Ovary (tissue), 10 donors: ENCODE measurements at regions of chr18 and their contacts with region 1.

Region 1: DNA sequence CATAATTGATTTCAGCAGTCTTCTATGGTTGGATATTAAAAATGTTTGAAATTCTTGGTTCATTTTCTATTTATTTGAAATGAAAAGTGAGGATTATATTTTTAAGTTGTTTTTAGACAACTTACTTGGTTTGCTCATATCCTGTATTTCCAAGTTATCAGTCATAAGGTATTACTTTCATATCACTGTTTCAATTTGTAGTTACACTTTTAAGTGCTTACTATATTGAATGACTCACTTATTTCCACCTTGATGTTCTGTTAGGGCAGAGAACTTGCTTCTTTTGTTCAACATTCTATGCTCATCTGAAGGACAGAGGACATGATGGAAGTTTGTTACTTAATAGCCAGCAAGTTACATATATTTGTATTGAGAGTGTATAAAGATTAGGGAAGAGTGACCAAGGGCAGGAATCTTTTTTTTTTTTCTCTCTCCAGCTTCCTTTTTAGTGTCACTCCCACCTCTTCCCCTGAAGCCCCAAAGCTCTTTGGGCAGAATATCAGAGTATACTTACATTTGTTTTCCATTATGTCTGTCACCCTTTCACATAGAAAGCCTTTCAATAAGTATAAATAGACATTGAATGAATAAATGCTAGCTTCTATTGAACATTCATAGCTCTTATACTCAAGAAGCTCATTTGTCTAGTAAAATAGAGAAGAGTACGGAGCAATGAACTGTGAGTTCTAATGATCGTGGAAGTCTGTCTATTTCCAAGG is 28.1 kb downstream of the PIK3C3 start:
- DNase-seq: no peak
- H3K4me3 ChIP-seq: no peak overlapping the region
- H3K27ac ChIP-seq: no peak overlapping the region
- H3K4me1 ChIP-seq: no peaks in the 10 kb centered on the region
- H3K27me3 ChIP-seq: no peaks in the 10 kb centered on the region
- CTCF ChIP-seq: no peak
- EP300 ChIP-seq: no peak
- POLR2A ChIP-seq: no peak

Region 2: DNA sequence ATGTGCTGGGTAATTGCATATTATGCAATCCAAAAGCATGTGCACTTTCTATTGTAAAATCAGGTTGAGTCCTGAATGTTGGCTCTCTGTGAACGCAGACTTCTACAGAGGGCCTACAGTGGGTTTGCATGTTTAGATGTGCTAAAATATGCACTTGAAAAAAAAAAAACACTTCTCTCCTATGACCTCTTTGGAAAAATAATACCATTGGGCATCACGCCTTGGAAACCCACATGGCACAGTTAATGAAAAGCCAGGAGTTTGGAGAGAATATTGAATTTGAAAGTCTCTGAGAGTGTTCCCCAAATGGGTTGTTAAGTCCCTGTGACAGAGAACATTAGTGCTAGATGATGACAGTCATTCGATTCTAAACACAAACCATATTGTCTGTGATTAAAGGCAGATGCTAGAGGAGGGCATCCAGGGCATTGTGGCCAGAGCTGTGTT is 738.5 kb before region 1 on chr18:
- intact Hi-C with region 1: no loop called
- DNase-seq: no peak
- H3K4me3 ChIP-seq: no peak overlapping the region
- H3K27ac ChIP-seq: no peak overlapping the region
- H3K4me1 ChIP-seq: no peaks in the 10 kb centered on the region
- H3K27me3 ChIP-seq: no peaks in the 10 kb centered on the region
- CTCF ChIP-seq: no peak
- EP300 ChIP-seq: no peak
- POLR2A ChIP-seq: no peak

Region 3: DNA sequence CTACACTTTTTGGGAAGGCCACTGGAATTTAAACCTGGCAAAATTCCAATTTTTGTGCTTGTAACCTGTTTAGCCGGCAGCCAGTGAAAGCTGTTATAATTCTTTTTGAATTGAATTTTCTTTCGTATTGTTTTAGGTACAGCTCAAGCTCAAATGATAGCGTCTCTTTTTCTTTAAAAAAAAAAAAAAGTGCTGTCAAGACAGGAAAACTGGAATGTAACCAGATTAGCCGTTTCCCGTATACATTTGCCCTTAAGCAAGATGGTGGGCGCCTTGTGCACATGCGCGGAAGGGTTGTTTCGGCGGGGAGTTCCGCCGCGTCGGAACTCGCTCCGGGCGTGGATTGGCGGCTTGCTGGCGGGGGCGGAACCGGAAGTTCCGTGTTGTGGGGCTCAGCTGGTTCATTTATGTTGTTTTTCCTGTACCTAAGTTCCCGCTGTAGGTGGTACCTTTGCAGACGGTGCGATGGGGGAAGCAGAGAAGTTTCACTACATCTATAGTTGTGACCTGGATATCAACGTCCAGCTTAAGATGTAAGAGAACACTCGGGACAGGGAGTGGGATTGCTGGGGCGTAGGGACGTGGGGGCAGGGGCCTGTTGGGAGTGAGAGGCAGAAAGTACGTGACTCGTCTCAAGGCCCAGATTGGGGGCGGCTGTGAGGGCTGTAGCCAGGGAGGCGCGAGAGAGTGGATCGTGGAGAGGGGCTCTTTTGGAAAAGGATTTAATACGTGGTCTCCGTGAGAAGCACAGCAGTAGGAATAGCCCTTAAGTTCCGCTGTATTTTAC is 28.1 kb before region 1 on chr18 and contains the start of gene PIK3C3:
- intact Hi-C with region 1: loop called in 1 of 4 experiments (anchors 1 kb)
- DNase-seq: peak; percentile 96 to 98 (median 96)
- H3K4me3 ChIP-seq: peak within 1 kb of the TSS; percentile 95
- H3K27ac ChIP-seq: peak within 1 kb of the TSS in 1 of 2 donors; percentile 54
- H3K4me1 ChIP-seq: peaks cover 2% of the 10 kb centered on the region
- H3K27me3 ChIP-seq: no peaks in the 10 kb centered on the region
- CTCF ChIP-seq: no peak
- EP300 ChIP-seq: no peak
- POLR2A ChIP-seq: no peak
- total RNA-seq, gene PIK3C3: 42.5 to 60.3 (median 51.0) TPM